ENCODE measurements at regions of chr13 and their contacts with region 1.

Region 1: GRCh38 chr13:57925250-57925649 is 293.7 kb downstream of the PCDH17 start:
- DNase-seq: no peak
- ATAC-seq: peak in 1 of 8 donors; percentile 70
- H3K4me3 ChIP-seq: no peak overlapping the region
- H3K27ac ChIP-seq: no peak overlapping the region
- H3K4me1 ChIP-seq: no peaks in the 10 kb centered on the region
- H3K27me3 ChIP-seq: no peaks in the 10 kb centered on the region
- CTCF ChIP-seq: peak in 6 of 9 donors; percentile 35 to 60 (median 50)

Region 2: GRCh38 chr13:57969951-57970350 is 44.7 kb after region 1 on chr13:
- intact Hi-C with region 1: no loop called
- DNase-seq: no peak
- ATAC-seq: peak in 1 of 8 donors; percentile 39
- H3K4me3 ChIP-seq: no peak overlapping the region
- H3K27ac ChIP-seq: no peak overlapping the region
- H3K4me1 ChIP-seq: peaks cover 0 to 11% (median 0%) of the 10 kb centered on the region in 9 donors
- H3K27me3 ChIP-seq: no peaks in the 10 kb centered on the region
- CTCF ChIP-seq: no peak

Region 3: GRCh38 chr13:58960888-58961287 is 1035.6 kb after region 1 on chr13:
- intact Hi-C with region 1: loop called in 1 of 10 experiments (anchors 10 kb)
- DNase-seq: no peak
- ATAC-seq: no peak
- H3K4me3 ChIP-seq: no peak overlapping the region
- H3K27ac ChIP-seq: no peak overlapping the region
- H3K4me1 ChIP-seq: peaks cover 0 to 3% (median 0%) of the 10 kb centered on the region in 9 donors
- H3K27me3 ChIP-seq: no peaks in the 10 kb centered on the region
- CTCF ChIP-seq: peak in 7 of 9 donors; percentile 25 to 53 (median 39)